ENCODE measurements at regions of chr12 and their contacts with region 1.

Region 1: DNA sequence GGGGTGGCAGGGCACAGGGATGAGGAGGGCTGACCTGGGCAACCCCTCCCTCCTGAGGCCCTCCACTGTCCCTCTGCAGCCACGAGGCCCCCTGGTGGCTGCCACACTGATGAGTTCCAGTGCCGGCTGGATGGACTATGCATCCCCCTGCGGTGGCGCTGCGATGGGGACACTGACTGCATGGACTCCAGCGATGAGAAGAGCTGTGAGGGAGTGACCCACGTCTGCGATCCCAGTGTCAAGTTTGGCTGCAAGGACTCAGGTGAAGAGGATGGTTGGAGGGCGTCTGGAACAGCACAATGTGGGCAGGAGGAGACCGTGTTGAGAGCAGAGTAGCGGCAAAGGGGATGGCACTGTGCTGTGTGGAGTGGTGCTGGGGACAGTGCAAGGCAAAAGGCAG is 25.7 kb upstream of the LRP1-AS start:
- DNase-seq: peak; percentile 72
- H3K4me3 Mint-ChIP-seq: no peak overlapping the region
- H3K27ac Mint-ChIP-seq: no peak overlapping the region
- H3K4me1 Mint-ChIP-seq: no peaks in the 10 kb centered on the region
- H3K27me3 Mint-ChIP-seq: no peaks in the 10 kb centered on the region

Region 2: DNA sequence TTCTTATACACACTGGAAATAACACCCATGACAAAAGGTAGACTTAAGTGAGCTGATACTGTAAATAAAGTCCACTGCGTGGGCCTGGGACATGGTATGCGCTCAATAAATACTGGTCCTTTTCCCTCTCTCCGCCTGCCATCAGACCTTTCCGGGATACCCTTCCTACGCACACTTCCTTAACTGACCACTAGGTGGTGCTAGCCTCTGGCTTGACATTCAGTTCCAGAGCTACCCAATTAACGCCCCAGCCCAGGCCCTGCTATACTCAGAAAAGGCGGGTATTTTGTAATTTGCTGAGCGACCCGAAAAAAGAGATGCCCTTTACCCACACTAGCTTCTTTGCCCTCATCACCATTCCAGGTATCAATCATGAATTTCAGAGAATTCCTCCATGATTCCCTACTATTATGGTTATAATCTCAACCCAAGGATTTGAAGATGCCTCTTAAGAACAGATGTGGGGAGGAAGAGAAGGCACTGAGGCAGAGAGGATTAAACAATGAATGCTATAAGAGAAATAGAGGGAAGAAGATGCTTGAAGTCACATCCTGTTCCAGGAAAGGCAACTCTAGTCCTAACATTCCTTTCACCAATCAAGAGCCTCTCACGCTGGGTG is 48.7 kb before region 1 on chr12:
- intact Hi-C with region 1: loop called (anchors 2 kb)
- DNase-seq: peak; percentile 93
- H3K4me3 Mint-ChIP-seq: no peak overlapping the region
- H3K27ac Mint-ChIP-seq: no peak overlapping the region
- H3K4me1 Mint-ChIP-seq: peaks cover 4% of the 10 kb centered on the region
- H3K27me3 Mint-ChIP-seq: peaks cover 31% of the 10 kb centered on the region

Measured in activated CD4-positive, alpha-beta T cell treated with anti-CD3 and anti-CD28 coated beads, Interleukin-2, amount 10 ng/mL, durations not matched to agents 24 days and 14 days (primary cell).